ENCODE measurements at regions of chr3 and their contacts with region 1.

Region 1: DNA sequence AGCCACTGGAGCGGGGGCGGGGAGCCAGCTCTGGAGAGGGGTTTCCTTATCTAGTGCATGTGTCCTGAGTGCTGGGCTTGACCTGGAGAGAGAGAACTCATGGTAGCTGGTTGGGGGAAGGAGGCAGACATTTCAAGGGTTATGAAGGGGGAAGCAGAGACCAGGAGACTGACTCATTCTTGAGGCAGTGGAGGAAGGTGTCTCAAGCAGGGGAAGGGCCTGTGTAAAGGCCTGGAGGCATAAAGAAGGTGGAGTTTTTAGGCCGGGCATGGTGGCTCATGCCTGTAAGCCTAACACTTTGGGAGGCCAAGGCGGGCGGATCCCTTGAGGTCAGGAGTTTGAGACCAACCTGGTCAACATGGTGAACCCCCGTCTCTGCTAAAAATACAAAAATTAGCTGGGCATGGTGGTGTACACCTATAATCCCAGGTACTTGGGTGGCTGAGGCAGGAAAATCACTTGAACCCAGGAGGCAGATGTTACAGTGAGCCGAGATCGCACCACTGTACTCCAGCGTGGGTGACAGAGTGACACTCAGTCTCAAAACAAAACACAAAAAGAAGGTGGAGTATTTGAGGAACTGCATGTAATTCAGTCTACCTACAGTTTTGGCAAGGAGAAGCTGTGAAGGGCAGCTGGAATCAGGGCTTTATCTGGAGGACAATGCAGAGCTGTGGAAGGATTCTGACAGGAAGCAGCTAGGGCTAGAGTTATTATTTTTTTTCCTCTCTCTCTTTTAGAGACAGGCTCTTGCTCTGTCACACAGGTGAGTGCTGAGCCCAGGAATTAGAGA is 6.6 kb downstream of the H1-8 start:
- DNase-seq: no peak
- H3K4me3 ChIP-seq: no peak overlapping the region
- H3K4me3 Mint-ChIP-seq: no peak overlapping the region
- H3K27ac Mint-ChIP-seq: peak overlapping the region; percentile 33
- H3K4me1 ChIP-seq: no peaks in the 10 kb centered on the region
- H3K4me1 Mint-ChIP-seq: no peaks in the 10 kb centered on the region
- H3K27me3 ChIP-seq: no peaks in the 10 kb centered on the region
- H3K27me3 Mint-ChIP-seq: peaks cover 3% of the 10 kb centered on the region
- CTCF ChIP-seq: no peak

Region 2: DNA sequence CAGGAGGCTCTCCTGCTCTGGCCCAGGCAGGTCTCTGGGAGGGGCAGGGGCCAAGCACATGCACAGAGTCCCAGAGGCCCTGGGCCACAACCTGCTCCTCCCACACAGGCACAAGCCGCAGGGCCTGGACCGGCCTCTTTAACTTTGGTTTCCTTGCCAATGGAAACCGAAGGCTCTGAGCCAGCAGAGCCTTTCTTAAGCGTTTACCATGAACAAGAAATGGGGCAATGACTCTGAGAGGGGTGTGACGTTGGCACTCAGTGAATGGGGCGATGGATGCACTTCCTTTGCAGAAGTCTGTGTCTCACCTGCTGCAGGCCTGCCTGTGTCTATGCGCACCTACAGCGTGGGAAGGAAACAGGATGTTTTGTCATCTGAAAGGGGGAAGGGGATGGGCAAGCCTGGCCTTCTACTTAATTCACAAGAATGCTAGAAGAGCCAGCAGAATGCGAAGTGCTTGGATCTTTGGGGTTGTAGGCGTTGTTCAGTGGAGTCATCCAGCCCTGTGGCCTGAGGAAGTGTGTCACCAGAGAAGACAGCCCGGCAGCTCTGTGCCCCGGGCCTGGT is 67.8 kb before region 1 on chr3:
- CTCF ChIA-PET with region 1: no interaction called
- POLR2A ChIA-PET with region 1: interaction called, 19 read pairs
- intact Hi-C with region 1: no loop called
- DNase-seq: no peak
- H3K4me3 ChIP-seq: no peak overlapping the region
- H3K4me3 Mint-ChIP-seq: no peak overlapping the region
- H3K27ac Mint-ChIP-seq: no peak overlapping the region
- H3K4me1 ChIP-seq: no peaks in the 10 kb centered on the region
- H3K4me1 Mint-ChIP-seq: peaks cover 11% of the 10 kb centered on the region
- H3K27me3 ChIP-seq: no peaks in the 10 kb centered on the region
- H3K27me3 Mint-ChIP-seq: no peaks in the 10 kb centered on the region
- CTCF ChIP-seq: no peak

Region 3: GRCh38 chr3:129809297-129809696 is 259.7 kb after region 1 on chr3:
- CTCF ChIA-PET with region 1: no interaction called
- POLR2A ChIA-PET with region 1: no interaction called
- intact Hi-C with region 1: no loop called
- DNase-seq: no peak
- H3K4me3 ChIP-seq: no peak overlapping the region
- H3K4me3 Mint-ChIP-seq: no peak overlapping the region
- H3K27ac Mint-ChIP-seq: no peak overlapping the region
- H3K4me1 ChIP-seq: no peaks in the 10 kb centered on the region
- H3K4me1 Mint-ChIP-seq: no peaks in the 10 kb centered on the region
- H3K27me3 ChIP-seq: no peaks in the 10 kb centered on the region
- H3K27me3 Mint-ChIP-seq: no peaks in the 10 kb centered on the region
- CTCF ChIP-seq: no peak